Left cardiac atrium (tissue), 4 donors: ENCODE measurements at regions of chr20 and their contacts with region 1.

Region 1: GRCh38 chr20:34876162-34877001 is at the start of gene ACSS2:
- DNase-seq: peak; percentile 99
- ATAC-seq: peak; percentile 89 to 93
- total RNA-seq, gene ACSS2: 80.8 to 118 TPM

Region 2: GRCh38 chr20:34955232-34956040 is 79.1 kb after region 1 on chr20 and contains the starts of genes GSS and MYH7B:
- intact Hi-C with region 1: loop called (anchors 2 to 5 kb)
- DNase-seq: peak; percentile 98
- ATAC-seq: peak; percentile 98
- total RNA-seq, gene GSS: 20.1 to 27.2 TPM
- total RNA-seq, gene MYH7B: 82.3 to 89.0 TPM

Region 3: DNA sequence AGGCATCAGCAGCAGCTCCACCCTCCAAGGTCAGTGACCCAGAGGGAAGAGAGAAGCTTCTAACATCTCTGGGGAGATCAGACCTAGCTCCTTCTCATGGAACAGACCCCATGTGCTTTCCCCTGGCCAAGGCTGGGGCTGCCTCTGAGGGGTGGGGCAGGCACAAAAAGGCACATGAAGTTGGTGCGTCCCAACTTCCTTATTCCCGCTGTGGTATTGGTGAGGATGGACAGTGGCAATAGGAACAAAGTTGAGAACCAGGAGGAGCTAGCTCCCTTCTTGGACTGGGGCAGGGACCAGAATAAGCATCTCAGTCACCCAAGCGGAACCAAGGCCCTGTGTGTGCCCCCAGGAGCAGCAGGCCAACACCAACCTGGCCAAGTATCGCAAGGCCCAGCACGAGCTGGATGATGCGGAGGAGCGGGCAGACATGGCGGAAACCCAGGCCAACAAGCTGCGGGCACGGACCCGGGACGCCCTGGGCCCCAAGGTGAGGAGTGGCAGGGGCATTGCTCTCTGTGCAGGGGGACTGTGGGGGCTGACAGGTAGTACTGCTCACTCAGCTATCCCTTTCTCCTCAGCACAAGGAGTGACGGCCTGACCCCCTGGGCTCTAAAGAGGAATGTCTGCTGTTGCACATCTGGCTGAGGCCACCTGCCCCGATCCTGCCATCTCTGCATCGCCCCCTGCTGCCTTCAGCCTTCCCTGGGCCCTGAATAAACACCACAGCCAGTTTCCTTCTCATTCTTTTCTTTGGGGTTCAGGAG is 125.4 kb after region 1 on chr20:
- intact Hi-C with region 1: no loop called
- DNase-seq: peak; percentile 22
- ATAC-seq: no peak